ENCODE measurements at regions of chr2 and their contacts with region 1.

Region 1: DNA sequence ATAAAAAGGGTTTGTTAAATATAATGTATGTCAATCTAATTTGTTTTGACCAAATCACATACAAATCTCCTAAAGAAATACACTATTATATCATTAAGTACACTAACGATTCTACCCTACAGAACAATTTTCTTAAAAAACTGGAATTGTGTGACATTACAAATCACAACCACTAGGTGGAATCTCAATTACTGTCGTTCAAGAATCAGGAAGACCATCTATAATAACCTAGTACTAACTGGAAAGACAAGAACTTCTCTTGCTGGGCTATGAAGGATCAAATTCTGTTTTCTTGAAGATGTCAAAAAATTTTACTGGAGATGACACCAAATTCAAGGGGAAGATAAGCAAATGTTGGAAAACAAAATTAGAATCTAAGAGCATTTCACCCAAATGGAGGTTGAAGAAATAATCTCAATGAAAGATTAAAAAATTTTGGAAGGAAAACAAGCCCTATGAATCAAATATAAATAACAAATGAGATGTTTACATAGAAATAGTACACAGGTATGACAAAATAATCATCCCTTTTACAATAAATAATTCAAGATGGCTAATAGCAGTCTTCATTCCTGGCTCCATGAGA is 110.9 kb downstream of the STK39 start:
- DNase-seq: no peak
- H3K4me3 ChIP-seq: no peak overlapping the region
- H3K27ac ChIP-seq: peak overlapping the region in 2 of 4 donors; percentile 10 to 56
- H3K4me1 ChIP-seq: peaks cover 0 to 23% (median 0%) of the 10 kb centered on the region in 3 donors
- H3K27me3 ChIP-seq: no peaks in the 10 kb centered on the region
- CTCF ChIP-seq: peak in 5 of 6 experiments; percentile 40 to 69 (median 58)
- POLR2A ChIP-seq: no peak

Region 2: GRCh38 chr2:168231609-168232241 is 95.2 kb after region 1 on chr2:
- intact Hi-C with region 1: no loop called
- DNase-seq: no peak
- H3K4me3 ChIP-seq: no peak overlapping the region
- H3K27ac ChIP-seq: no peak overlapping the region
- H3K4me1 ChIP-seq: peaks cover 0 to 21% (median 0%) of the 10 kb centered on the region in 3 donors
- H3K27me3 ChIP-seq: no peaks in the 10 kb centered on the region
- CTCF ChIP-seq: no peak
- POLR2A ChIP-seq: no peak

Region 3: DNA sequence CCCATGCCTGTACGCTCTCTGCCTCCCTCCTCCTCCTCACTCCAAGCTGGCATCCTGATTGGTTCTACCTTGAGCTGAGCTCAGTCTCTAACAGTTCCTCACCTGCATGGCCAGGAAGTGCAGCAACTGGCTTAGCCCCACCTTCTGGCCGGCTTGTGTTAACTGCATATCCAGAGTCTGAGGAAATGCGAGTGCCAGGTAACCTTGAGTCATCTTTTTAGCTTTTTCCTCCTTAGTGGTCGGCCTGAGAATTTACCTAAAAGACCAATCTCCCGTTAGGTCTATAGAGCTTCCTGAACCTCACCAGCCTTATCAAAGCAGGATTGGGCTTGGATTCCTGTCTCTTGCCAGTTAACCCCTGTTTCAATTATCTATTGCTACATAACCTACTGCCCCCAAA is 200.4 kb after region 1 on chr2:
- intact Hi-C with region 1: loop called (anchors 10 kb)
- DNase-seq: no peak
- H3K4me3 ChIP-seq: no peak overlapping the region
- H3K27ac ChIP-seq: no peak overlapping the region
- H3K4me1 ChIP-seq: no peaks in the 10 kb centered on the region
- H3K27me3 ChIP-seq: peaks cover 0 to 13% (median 0%) of the 10 kb centered on the region in 4 donors
- CTCF ChIP-seq: peak in 5 of 6 experiments; percentile 25 to 77 (median 52)
- POLR2A ChIP-seq: no peak